ENCODE measurements at regions of chr2 and their contacts with region 1.

Region 1: DNA sequence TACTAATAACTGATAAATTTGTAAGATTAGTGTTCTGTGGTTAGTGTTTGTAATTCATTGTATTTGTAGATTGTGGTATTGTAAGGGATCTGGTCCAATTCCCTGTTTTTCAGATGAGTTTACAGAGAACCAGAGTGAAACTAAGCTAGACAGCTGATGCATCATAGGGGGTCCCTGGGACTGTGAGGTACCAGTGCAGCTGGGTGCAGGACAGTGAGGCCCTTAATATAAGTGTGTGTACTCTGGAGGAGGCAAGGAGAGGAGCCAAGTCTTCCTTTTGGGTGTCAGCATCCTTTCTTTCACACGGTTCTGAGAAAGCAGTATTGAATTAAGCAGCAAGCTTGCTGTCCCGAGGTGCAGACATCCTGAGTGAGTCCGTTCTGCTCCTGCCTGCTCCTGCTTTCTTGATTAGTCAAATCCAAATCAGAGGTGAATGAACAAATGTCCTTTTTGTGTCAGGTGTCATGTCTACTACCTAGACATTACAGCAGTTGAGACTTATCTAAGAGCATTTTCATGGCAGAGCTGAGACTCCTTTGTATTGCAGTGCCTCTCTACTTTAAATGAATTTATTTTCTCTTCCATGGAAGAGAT is 194.9 kb downstream of the MCFD2 start:
- DNase-seq: no peak
- ATAC-seq: no peak
- H3K4me3 ChIP-seq: no peak overlapping the region
- H3K4me3 Mint-ChIP-seq: peak overlapping the region; percentile 20
- H3K27ac ChIP-seq: peak overlapping the region in 1 of 2 donors; percentile 58
- H3K27ac Mint-ChIP-seq: no peak overlapping the region
- H3K4me1 ChIP-seq: peaks cover 17 to 69% of the 10 kb centered on the region in 2 donors
- H3K4me1 Mint-ChIP-seq: peaks cover 83% of the 10 kb centered on the region
- H3K27me3 ChIP-seq: no peaks in the 10 kb centered on the region
- H3K27me3 Mint-ChIP-seq: no peaks in the 10 kb centered on the region
- CTCF ChIP-seq: no peak

Region 2: GRCh38 chr2:45578056-45578809 is 1142.5 kb before region 1 on chr2:
- CTCF ChIA-PET with region 1: no interaction called
- POLR2A ChIA-PET with region 1: no interaction called
- intact Hi-C with region 1: no loop called
- DNase-seq: peak; percentile 49
- ATAC-seq: peak; percentile 49
- H3K4me3 ChIP-seq: no peak overlapping the region
- H3K4me3 Mint-ChIP-seq: no peak overlapping the region
- H3K27ac ChIP-seq: no peak overlapping the region
- H3K27ac Mint-ChIP-seq: no peak overlapping the region
- H3K4me1 ChIP-seq: no peaks in the 10 kb centered on the region
- H3K4me1 Mint-ChIP-seq: peaks cover 1% of the 10 kb centered on the region
- H3K27me3 ChIP-seq: no peaks in the 10 kb centered on the region
- H3K27me3 Mint-ChIP-seq: no peaks in the 10 kb centered on the region
- CTCF ChIP-seq: peak; percentile 59

Region 3: DNA sequence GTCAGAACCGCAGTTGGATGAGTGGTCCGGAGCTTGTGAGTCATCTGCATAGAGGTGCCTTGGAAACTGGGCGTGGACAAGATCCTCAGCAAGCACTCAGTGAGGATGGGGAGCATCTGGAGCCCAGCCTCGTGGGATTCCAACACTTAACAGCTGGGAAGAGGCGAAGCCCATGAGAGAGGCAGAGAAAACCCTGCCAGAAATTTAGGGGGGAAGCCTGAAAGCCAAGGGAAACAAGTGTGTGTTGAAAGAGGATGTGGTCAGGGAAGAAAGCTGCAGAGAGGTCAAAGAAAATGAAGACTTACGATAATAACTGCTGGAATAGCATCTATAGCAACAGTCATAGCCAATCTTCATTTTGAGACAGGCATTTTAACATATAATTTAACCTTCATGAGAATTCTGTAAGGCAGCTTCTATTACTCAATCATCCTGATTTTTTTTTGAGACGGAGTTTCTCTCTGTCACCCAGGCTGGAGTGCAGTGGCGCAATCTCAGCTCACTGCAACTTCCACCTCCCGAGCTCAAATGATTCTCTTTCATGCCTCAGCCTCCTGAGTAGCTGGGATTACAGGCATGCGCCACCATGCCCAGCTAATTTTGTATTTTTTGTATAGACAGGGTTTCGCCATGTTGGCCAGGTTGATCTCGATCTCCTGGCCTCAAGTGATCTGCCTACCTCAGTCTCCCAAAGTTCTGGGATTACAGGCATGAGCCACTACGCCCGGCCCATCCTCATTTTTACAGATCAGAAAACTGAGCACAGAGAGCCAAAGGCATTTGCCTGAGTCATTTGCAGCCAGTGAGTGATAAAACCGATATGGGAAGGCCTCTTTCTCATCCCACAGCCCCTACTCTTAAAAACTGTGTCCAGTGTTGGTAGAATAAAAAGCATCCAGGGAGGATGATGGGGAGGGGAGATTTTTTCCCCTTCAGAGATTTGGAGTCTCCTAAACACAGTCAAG is 637.9 kb before region 1 on chr2:
- CTCF ChIA-PET with region 1: no interaction called
- POLR2A ChIA-PET with region 1: no interaction called
- intact Hi-C with region 1: no loop called
- DNase-seq: no peak
- ATAC-seq: no peak
- H3K4me3 ChIP-seq: no peak overlapping the region
- H3K4me3 Mint-ChIP-seq: no peak overlapping the region
- H3K27ac ChIP-seq: no peak overlapping the region
- H3K27ac Mint-ChIP-seq: no peak overlapping the region
- H3K4me1 ChIP-seq: no peaks in the 10 kb centered on the region
- H3K4me1 Mint-ChIP-seq: no peaks in the 10 kb centered on the region
- H3K27me3 ChIP-seq: no peaks in the 10 kb centered on the region
- H3K27me3 Mint-ChIP-seq: no peaks in the 10 kb centered on the region
- CTCF ChIP-seq: no peak

Region 4: DNA sequence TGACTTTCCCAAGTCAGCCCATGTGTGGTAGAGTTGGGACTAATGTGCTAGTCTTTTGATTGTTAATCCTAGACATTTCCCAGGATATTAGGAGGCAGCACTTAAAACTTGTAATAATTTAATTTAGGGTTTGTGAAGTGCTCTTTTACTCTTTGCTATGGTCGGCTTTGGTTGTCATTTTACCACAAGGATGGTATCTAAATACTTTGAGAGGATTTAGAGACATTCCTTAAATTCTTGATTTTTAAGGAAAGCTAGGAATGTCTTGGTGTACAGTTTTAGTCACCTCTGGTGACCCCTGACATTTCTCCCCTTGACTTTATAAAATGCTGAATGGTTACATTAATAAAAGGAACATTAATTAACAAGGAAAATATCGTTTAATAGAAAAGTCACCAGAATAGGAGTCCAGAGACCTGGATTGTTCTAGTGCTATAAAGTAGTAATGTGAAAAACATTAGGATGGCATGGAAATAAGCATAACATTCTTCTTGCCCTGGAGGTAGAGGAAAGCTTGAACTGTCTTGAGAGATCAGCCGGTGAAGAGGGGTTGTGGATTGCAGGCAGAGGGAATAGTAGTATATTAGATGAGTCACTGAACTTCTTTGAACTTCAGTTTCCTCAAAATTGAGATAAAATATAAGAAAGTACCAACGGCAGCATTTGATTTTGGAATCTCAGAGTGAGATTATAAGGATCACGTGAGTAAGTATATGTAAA is 14.3 kb before region 1 on chr2:
- CTCF ChIA-PET with region 1: no interaction called
- POLR2A ChIA-PET with region 1: no interaction called
- intact Hi-C with region 1: loop called (anchors 2 kb)
- DNase-seq: no peak
- ATAC-seq: no peak
- H3K4me3 ChIP-seq: no peak overlapping the region
- H3K4me3 Mint-ChIP-seq: no peak overlapping the region
- H3K27ac ChIP-seq: no peak overlapping the region
- H3K27ac Mint-ChIP-seq: no peak overlapping the region
- H3K4me1 ChIP-seq: peaks cover 0 to 50% of the 10 kb centered on the region in 2 donors
- H3K4me1 Mint-ChIP-seq: peaks cover 51% of the 10 kb centered on the region
- H3K27me3 ChIP-seq: no peaks in the 10 kb centered on the region
- H3K27me3 Mint-ChIP-seq: no peaks in the 10 kb centered on the region
- CTCF ChIP-seq: no peak

Region 5: GRCh38 chr2:46803911-46804670 is 83.4 kb after region 1 on chr2:
- CTCF ChIA-PET with region 1: no interaction called
- POLR2A ChIA-PET with region 1: no interaction called
- intact Hi-C with region 1: no loop called
- DNase-seq: no peak
- ATAC-seq: no peak
- H3K4me3 ChIP-seq: no peak overlapping the region
- H3K4me3 Mint-ChIP-seq: no peak overlapping the region
- H3K27ac ChIP-seq: no peak overlapping the region
- H3K27ac Mint-ChIP-seq: no peak overlapping the region
- H3K4me1 ChIP-seq: no peaks in the 10 kb centered on the region
- H3K4me1 Mint-ChIP-seq: no peaks in the 10 kb centered on the region
- H3K27me3 ChIP-seq: no peaks in the 10 kb centered on the region
- H3K27me3 Mint-ChIP-seq: peaks cover 17% of the 10 kb centered on the region
- CTCF ChIP-seq: no peak